A673 (cell line): ENCODE measurements at regions of chr15 and their contacts with region 1.

Region 1: GRCh38 chr15:34209421-34210282 is at the start of gene KATNBL1:
- DNase-seq: peak; percentile 97
- H3K4me3 ChIP-seq: peak within 1 kb of the TSS; percentile 62
- H3K27ac ChIP-seq: peak within 1 kb of the TSS; percentile 85
- H3K4me1 ChIP-seq: peaks cover 4% of the 10 kb centered on the region
- H3K27me3 ChIP-seq: no peaks in the 10 kb centered on the region
- CTCF ChIP-seq: peak; percentile 96
- total RNA-seq, gene KATNBL1: 53.2 and 55.1 TPM in 2 replicates

Region 2: GRCh38 chr15:32878869-32879805 is 1330.5 kb before region 1 on chr15:
- CTCF ChIA-PET with region 1: no interaction called
- POLR2A ChIA-PET with region 1: no interaction called
- intact Hi-C with region 1: no loop called
- DNase-seq: no peak
- H3K4me3 ChIP-seq: no peak overlapping the region
- H3K27ac ChIP-seq: no peak overlapping the region
- H3K4me1 ChIP-seq: no peaks in the 10 kb centered on the region
- H3K27me3 ChIP-seq: no peaks in the 10 kb centered on the region
- CTCF ChIP-seq: no peak

Region 3: DNA sequence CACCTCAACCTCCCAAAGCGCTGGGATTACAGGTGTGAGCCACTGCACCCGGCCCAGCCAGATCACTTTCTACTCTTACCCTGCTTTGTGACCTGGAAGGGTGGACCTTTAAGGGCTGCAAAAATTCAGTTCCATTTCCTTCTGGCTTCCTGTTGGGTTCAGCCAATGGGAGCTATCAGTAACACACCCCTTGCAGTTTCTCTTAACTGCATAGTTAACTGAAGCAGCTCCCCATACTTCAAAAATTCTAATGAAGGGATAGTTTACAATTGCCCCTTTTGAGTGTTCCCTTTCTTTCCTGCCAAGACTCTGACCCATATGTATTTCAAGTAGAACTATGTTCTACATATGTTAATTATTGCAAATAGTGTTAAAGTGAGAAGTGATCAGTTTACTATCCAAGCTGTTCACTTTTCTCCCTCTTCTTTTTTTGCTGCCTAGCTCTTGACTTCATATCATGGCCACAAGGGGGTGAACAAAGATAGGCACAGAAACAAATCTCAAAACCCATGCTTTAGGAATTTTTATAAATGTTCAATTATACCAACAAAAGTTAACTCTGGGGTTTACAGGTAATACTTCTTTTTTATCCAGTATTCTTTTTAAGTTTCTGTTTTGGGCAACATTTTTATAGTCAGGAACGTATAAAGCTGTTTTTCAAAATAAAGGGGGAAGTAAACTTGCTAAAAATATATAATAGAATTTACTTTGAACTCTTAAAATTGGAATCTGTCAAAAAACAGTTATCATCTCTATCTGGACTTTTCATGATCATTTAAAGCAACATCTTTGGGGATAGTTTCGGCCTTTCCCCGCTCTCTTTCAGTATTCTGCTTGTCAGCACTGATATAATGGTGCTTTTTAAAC is 99.6 kb before region 1 on chr15:
- CTCF ChIA-PET with region 1: interaction called, 27 read pairs
- POLR2A ChIA-PET with region 1: interaction called, 3 read pairs
- intact Hi-C with region 1: loop called (anchors 1 kb)
- DNase-seq: peak; percentile 58
- H3K4me3 ChIP-seq: no peak overlapping the region
- H3K27ac ChIP-seq: no peak overlapping the region
- H3K4me1 ChIP-seq: no peaks in the 10 kb centered on the region
- H3K27me3 ChIP-seq: no peaks in the 10 kb centered on the region
- CTCF ChIP-seq: peak; percentile 72